Ascending aorta (tissue), 2 donors: ENCODE measurements at regions of chr22 and their contacts with region 1.

Region 1: DNA sequence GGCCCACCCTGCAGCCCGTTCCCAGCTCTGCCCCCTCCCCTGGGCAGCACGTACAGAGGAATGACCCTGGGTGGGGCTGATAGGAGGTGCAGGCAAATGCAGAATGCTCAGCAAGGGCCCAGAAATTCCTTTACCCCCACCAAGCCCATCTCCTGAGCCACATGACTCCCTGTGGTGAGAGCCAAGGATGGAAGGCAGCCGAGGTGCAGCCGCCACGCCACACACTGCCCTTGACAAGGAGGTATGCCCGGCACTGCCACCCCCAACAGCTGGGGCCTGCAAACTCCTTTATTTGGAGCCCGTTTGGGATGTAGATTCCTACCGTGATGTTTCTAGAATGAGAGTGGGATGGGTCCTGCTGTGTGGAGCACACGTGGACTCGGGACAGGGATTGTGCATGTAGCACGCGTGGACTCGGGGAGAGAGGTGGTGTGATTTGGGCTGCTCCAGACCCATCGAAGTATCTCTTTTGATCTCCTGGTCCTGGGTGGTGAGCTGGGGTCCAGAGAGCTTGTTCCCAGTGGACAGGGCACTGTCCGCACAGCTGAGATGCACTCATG is 12.9 kb downstream of the GTSE1 start:
- DNase-seq: no peak
- H3K4me3 ChIP-seq: no peak overlapping the region
- H3K27ac ChIP-seq: no peak overlapping the region
- H3K4me1 ChIP-seq: no peaks in the 10 kb centered on the region
- H3K27me3 ChIP-seq: no peaks in the 10 kb centered on the region
- CTCF ChIP-seq: no peak

Region 2: GRCh38 chr22:46122511-46122971 is 187.1 kb before region 1 on chr22:
- intact Hi-C with region 1: loop called (anchors 1 kb)
- DNase-seq: no peak
- H3K4me3 ChIP-seq: peak overlapping the region in 1 of 2 donors; percentile 14
- H3K27ac ChIP-seq: no peak overlapping the region
- H3K4me1 ChIP-seq: peaks cover 0 to 4% of the 10 kb centered on the region in 2 donors
- H3K27me3 ChIP-seq: no peaks in the 10 kb centered on the region
- CTCF ChIP-seq: peak; percentile 87 to 98 (median 97)

Region 3: DNA sequence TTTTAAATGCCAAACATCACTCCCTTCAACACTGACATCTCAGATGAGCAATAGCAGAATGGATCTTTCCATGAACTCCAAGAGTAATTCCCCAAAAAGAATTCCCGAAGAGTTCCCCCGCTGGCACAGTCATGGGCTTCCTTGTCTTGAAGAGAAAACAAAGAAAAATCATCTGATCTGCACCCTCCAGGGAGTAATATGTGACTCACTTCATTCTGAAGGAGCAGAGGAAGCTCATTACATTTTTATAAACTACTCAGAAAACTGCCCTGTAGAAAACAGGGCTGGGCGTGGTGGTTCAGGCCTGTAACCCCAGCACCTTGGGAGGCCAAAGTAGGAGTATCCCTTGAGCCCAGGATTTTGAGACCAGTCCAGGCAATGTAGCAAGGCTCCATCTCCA is 192.1 kb after region 1 on chr22:
- intact Hi-C with region 1: no loop called
- DNase-seq: no peak
- H3K4me3 ChIP-seq: no peak overlapping the region
- H3K27ac ChIP-seq: no peak overlapping the region
- H3K4me1 ChIP-seq: no peaks in the 10 kb centered on the region
- H3K27me3 ChIP-seq: no peaks in the 10 kb centered on the region
- CTCF ChIP-seq: no peak